Astrocyte of the cerebellum (primary cell): ENCODE measurements at regions of chr5 and their contacts with region 1.

Region 1: DNA sequence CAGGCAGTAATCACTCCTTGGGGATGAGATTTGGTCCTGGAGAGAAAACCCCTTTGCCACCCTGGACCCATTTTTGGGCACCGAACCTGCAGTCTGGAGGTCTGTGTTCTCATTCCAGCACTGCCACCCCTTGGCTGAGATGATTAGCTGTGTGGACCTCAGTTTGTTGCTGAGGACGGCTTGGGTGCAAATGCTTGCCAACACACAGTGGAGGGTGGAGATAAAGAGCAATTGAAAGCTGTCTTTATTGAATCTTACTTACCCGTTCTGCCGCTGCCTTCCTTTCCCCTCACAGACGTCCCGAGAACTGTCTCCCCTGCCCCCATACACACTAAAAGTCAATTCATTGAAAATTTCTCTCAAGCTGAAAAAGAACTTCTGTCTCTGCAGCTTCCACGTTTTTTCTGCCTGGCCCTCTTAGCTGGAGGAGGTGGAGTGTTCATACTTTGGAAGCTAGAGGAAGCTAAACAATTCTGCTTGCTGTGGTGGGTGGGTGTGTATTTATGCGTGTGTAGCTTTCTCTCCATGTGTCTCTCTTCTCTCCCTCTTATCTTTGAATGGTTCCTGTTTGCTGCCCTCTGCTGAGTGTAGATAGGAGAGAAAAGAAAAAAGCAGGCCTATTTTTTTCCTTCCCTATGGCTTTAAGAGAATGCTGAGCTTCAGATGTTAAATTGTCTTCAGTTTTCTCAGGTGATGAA is 6.6 kb downstream of the GALNT10 start:
- DNase-seq: peak; percentile 20
- H3K4me3 ChIP-seq: no peak overlapping the region
- CTCF ChIP-seq: peak; percentile 53

Region 2: DNA sequence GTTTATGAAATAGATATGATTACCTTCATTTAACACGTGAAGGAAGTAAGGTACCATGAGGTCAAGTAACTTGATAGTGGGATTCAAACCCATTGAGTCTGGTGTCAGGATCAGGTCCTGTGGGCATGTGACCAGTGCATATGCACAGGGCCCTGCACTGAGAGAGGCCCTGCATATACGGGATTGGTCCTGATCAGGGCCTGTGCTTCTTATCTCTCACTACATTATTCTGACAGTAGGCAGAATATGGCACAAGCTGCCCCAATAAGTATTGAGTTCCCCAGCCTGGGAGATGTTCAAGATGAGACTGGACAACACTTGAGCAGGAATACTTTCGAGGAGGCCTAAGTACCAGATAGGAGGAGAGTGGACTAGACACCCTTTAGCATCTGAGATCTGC is 37.4 kb after region 1 on chr5:
- in situ Hi-C with region 1: loop called (anchors 5 kb)
- DNase-seq: no peak
- H3K4me3 ChIP-seq: no peak overlapping the region
- CTCF ChIP-seq: no peak